ENCODE measurements at regions of chr16 and their contacts with region 1.

Region 1: GRCh38 chr16:11880007-11880406 is 28.7 kb upstream of the RSL1D1 start:
- DNase-seq: no peak
- ATAC-seq: peak in 2 of 4 donors; percentile 32 to 43
- H3K4me3 ChIP-seq: no peak overlapping the region
- H3K27ac ChIP-seq: no peak overlapping the region
- H3K4me1 ChIP-seq: no peaks in the 10 kb centered on the region
- H3K27me3 ChIP-seq: no peaks in the 10 kb centered on the region
- CTCF ChIP-seq: no peak

Region 2: GRCh38 chr16:11774065-11774626 is 105.9 kb before region 1 on chr16:
- intact Hi-C with region 1: loop called (anchors 5 kb)
- DNase-seq: no peak
- ATAC-seq: no peak
- H3K4me3 ChIP-seq: no peak overlapping the region
- H3K27ac ChIP-seq: no peak overlapping the region
- H3K4me1 ChIP-seq: no peaks in the 10 kb centered on the region
- H3K27me3 ChIP-seq: no peaks in the 10 kb centered on the region
- CTCF ChIP-seq: no peak

Region 3: GRCh38 chr16:11949527-11949926 is 69.5 kb after region 1 on chr16:
- intact Hi-C with region 1: no loop called
- DNase-seq: no peak
- ATAC-seq: peak in 3 of 4 donors; percentile 58 to 76 (median 61)
- H3K4me3 ChIP-seq: no peak overlapping the region
- H3K27ac ChIP-seq: no peak overlapping the region
- H3K4me1 ChIP-seq: no peaks in the 10 kb centered on the region
- H3K27me3 ChIP-seq: no peaks in the 10 kb centered on the region
- CTCF ChIP-seq: peak; percentile 47

Measured in psoas muscle (tissue), 8 donors.